CD8-positive, alpha-beta memory T cell (primary cell): ENCODE measurements at regions of chr4 and their contacts with region 1.

Region 1: GRCh38 chr4:80125252-80126177 is 52.5 kb upstream of the ANTXR2 start:
- DNase-seq: peak in 4 of 5 donors; percentile 2 to 63 (median 58)
- H3K4me3 ChIP-seq: peak overlapping the region; percentile 31
- H3K4me3 Mint-ChIP-seq: peak overlapping the region; percentile 14 to 71 (median 44)
- H3K27ac ChIP-seq: peak overlapping the region; percentile 76
- H3K27ac Mint-ChIP-seq: peak overlapping the region; percentile 78 to 95 (median 90)
- H3K4me1 ChIP-seq: peaks cover 46% of the 10 kb centered on the region
- H3K4me1 Mint-ChIP-seq: peaks cover 48 to 60% (median 53%) of the 10 kb centered on the region in 3 donors
- H3K27me3 ChIP-seq: no peaks in the 10 kb centered on the region
- H3K27me3 Mint-ChIP-seq: no peaks in the 10 kb centered on the region

Region 2: GRCh38 chr4:78845472-78845871 is 1280.0 kb before region 1 on chr4:
- CTCF ChIA-PET with region 1: no interaction called
- POLR2A ChIA-PET with region 1: no interaction called
- DNase-seq: no peak
- H3K4me3 ChIP-seq: no peak overlapping the region
- H3K4me3 Mint-ChIP-seq: no peak overlapping the region
- H3K27ac ChIP-seq: no peak overlapping the region
- H3K27ac Mint-ChIP-seq: no peak overlapping the region
- H3K4me1 ChIP-seq: no peaks in the 10 kb centered on the region
- H3K4me1 Mint-ChIP-seq: no peaks in the 10 kb centered on the region
- H3K27me3 ChIP-seq: no peaks in the 10 kb centered on the region
- H3K27me3 Mint-ChIP-seq: no peaks in the 10 kb centered on the region

Region 3: GRCh38 chr4:79982601-79983322 is 142.8 kb before region 1 on chr4:
- CTCF ChIA-PET with region 1: no interaction called
- POLR2A ChIA-PET with region 1: no interaction called
- DNase-seq: no peak
- H3K4me3 ChIP-seq: no peak overlapping the region
- H3K4me3 Mint-ChIP-seq: no peak overlapping the region
- H3K27ac ChIP-seq: no peak overlapping the region
- H3K27ac Mint-ChIP-seq: no peak overlapping the region
- H3K4me1 ChIP-seq: no peaks in the 10 kb centered on the region
- H3K4me1 Mint-ChIP-seq: peaks cover 6 to 11% (median 9%) of the 10 kb centered on the region in 3 donors
- H3K27me3 ChIP-seq: no peaks in the 10 kb centered on the region
- H3K27me3 Mint-ChIP-seq: no peaks in the 10 kb centered on the region

Region 4: DNA sequence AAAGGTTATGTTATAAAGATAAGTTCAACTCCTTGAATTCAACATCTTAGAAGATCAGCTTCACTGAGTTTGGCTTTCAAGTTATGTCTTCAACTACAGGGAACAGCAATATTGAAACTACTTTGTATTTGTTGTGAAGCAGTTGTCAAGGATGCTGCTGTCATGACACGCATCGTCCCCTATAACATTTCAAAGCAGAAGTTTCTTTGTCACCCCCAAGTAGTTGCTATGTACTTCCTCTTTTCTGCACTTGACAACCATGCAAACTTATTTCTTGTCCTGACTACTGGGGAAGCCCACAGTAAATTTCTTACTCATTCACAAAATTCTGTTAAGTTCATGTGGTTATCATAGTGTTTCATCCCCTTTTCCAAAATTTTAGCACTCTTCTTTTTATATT is 66.8 kb before region 1 on chr4:
- CTCF ChIA-PET with region 1: no interaction called
- POLR2A ChIA-PET with region 1: no interaction called
- DNase-seq: peak in 4 of 5 donors; percentile 28 to 84 (median 77)
- H3K4me3 ChIP-seq: peak overlapping the region; percentile 7
- H3K4me3 Mint-ChIP-seq: peak overlapping the region; percentile 61 to 85 (median 81)
- H3K27ac ChIP-seq: peak overlapping the region; percentile 92
- H3K27ac Mint-ChIP-seq: peak overlapping the region; percentile 92 to 100 (median 96)
- H3K4me1 ChIP-seq: peaks cover 18% of the 10 kb centered on the region
- H3K4me1 Mint-ChIP-seq: peaks cover 36 to 63% (median 46%) of the 10 kb centered on the region in 3 donors
- H3K27me3 ChIP-seq: no peaks in the 10 kb centered on the region
- H3K27me3 Mint-ChIP-seq: no peaks in the 10 kb centered on the region

Region 5: GRCh38 chr4:80138551-80139538 is 13.3 kb after region 1 on chr4:
- CTCF ChIA-PET with region 1: interaction called, 37 read pairs
- POLR2A ChIA-PET with region 1: interaction called, 6 read pairs
- DNase-seq: peak; percentile 7 to 72 (median 51)
- H3K4me3 ChIP-seq: no peak overlapping the region
- H3K4me3 Mint-ChIP-seq: peak overlapping the region in 6 of 7 donors; percentile 1 to 55 (median 6)
- H3K27ac ChIP-seq: peak overlapping the region; percentile 18
- H3K27ac Mint-ChIP-seq: peak overlapping the region; percentile 62 to 91 (median 79)
- H3K4me1 ChIP-seq: peaks cover 37% of the 10 kb centered on the region
- H3K4me1 Mint-ChIP-seq: peaks cover 26 to 54% (median 49%) of the 10 kb centered on the region in 3 donors
- H3K27me3 ChIP-seq: no peaks in the 10 kb centered on the region
- H3K27me3 Mint-ChIP-seq: no peaks in the 10 kb centered on the region

Region 6: GRCh38 chr4:80173401-80173800 is 47.9 kb after region 1 on chr4:
- CTCF ChIA-PET with region 1: interaction called, 135 read pairs
- POLR2A ChIA-PET with region 1: interaction called, 6 read pairs
- DNase-seq: peak in 4 of 5 donors; percentile 39 to 72 (median 66)
- H3K4me3 ChIP-seq: peak overlapping the region; percentile 2
- H3K4me3 Mint-ChIP-seq: peak overlapping the region; percentile 47 to 82 (median 71)
- H3K27ac ChIP-seq: no peak overlapping the region
- H3K27ac Mint-ChIP-seq: peak overlapping the region; percentile 83 to 98 (median 94)
- H3K4me1 ChIP-seq: peaks cover 43% of the 10 kb centered on the region
- H3K4me1 Mint-ChIP-seq: peaks cover 48 to 67% (median 55%) of the 10 kb centered on the region in 3 donors
- H3K27me3 ChIP-seq: no peaks in the 10 kb centered on the region
- H3K27me3 Mint-ChIP-seq: no peaks in the 10 kb centered on the region

Region 7: GRCh38 chr4:80184053-80184790 is 58.7 kb after region 1 on chr4:
- CTCF ChIA-PET with region 1: interaction called, 135 read pairs
- POLR2A ChIA-PET with region 1: interaction called, 34 read pairs
- DNase-seq: peak; percentile 87 to 93 (median 89)
- H3K4me3 ChIP-seq: peak overlapping the region; percentile 97
- H3K4me3 Mint-ChIP-seq: peak overlapping the region; percentile 96 to 100 (median 99)
- H3K27ac ChIP-seq: peak overlapping the region; percentile 83
- H3K27ac Mint-ChIP-seq: peak overlapping the region; percentile 87 to 98 (median 98)
- H3K4me1 ChIP-seq: peaks cover 36% of the 10 kb centered on the region
- H3K4me1 Mint-ChIP-seq: peaks cover 58 to 64% (median 59%) of the 10 kb centered on the region in 3 donors
- H3K27me3 ChIP-seq: no peaks in the 10 kb centered on the region
- H3K27me3 Mint-ChIP-seq: peaks cover 0 to 7% of the 10 kb centered on the region in 2 donors

Region 8: GRCh38 chr4:80189956-80190677 is 64.6 kb after region 1 on chr4:
- CTCF ChIA-PET with region 1: interaction called, 135 read pairs
- POLR2A ChIA-PET with region 1: interaction called, 34 read pairs
- DNase-seq: no peak
- H3K4me3 ChIP-seq: no peak overlapping the region
- H3K4me3 Mint-ChIP-seq: peak overlapping the region in 1 of 7 donors; percentile 55
- H3K27ac ChIP-seq: no peak overlapping the region
- H3K27ac Mint-ChIP-seq: no peak overlapping the region
- H3K4me1 ChIP-seq: peaks cover 13% of the 10 kb centered on the region
- H3K4me1 Mint-ChIP-seq: peaks cover 22 to 28% (median 23%) of the 10 kb centered on the region in 3 donors
- H3K27me3 ChIP-seq: no peaks in the 10 kb centered on the region
- H3K27me3 Mint-ChIP-seq: peaks cover 0 to 2% of the 10 kb centered on the region in 2 donors

Region 9: DNA sequence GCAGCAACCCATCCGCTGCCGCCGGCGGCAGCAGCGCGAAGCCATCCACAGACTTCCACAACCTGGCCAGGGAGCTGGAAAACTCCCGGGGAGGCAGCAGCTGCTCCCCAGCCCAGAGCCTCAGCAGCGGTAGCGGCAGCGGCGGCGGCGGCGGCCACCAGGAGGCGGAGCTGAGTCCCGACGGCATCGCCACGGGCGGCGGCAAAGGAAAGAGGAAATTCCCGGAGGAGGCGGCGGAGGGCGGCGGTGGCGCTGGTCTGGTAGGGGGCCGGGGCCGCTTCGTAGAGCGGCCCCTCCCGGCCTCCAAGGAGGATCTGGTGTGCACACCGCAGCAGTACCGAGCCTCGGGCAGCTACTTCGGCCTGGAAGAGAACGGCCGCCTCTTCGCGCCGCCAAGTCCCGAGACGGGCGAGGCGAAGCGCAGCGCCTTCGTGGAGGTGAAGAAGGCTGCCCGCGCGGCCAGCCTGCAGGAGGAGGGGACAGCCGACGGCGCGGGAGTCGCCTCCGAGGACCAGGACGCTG is 76.7 kb after region 1 on chr4:
- CTCF ChIA-PET with region 1: interaction called, 47 read pairs
- POLR2A ChIA-PET with region 1: interaction called, 16 read pairs
- DNase-seq: peak; percentile 68 to 84 (median 77)
- H3K4me3 ChIP-seq: peak overlapping the region; percentile 42
- H3K4me3 Mint-ChIP-seq: peak overlapping the region; percentile 86 to 97 (median 87)
- H3K27ac ChIP-seq: peak overlapping the region; percentile 67
- H3K27ac Mint-ChIP-seq: peak overlapping the region; percentile 74 to 95 (median 94)
- H3K4me1 ChIP-seq: peaks cover 12% of the 10 kb centered on the region
- H3K4me1 Mint-ChIP-seq: peaks cover 27 to 36% (median 27%) of the 10 kb centered on the region in 3 donors
- H3K27me3 ChIP-seq: no peaks in the 10 kb centered on the region
- H3K27me3 Mint-ChIP-seq: peaks cover 0 to 7% of the 10 kb centered on the region in 2 donors

Region 10: DNA sequence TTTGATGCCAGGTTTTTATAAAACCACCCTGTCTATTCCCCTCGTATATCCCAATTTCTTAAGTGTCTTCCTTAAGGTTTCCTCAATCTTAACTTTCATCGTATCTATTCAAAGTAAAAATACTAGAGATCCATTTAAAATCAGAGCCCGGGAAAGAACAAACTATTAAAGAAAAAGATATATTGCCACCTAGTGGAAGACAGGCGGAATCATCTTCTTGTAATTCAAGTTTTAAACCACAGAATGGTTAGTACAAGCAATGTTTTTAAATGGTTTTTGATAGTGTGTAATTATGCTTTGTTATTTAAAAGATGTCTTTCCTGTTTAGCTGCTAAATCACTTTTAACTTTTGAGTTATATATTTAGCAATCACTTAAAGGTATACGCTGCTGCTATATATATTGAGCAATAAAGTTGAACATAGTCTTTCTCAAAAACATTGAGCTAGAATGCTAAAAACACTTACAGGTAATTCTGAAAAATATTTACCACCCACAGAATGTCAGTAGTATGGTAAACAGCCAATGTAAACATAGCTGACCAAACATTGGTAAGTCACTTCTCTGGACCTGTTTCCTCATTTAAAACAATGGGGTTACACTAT is 90.0 kb after region 1 on chr4:
- CTCF ChIA-PET with region 1: interaction called, 10 read pairs
- POLR2A ChIA-PET with region 1: interaction called, 3 read pairs
- DNase-seq: peak in 2 of 5 donors; percentile 38 to 41
- H3K4me3 ChIP-seq: no peak overlapping the region
- H3K4me3 Mint-ChIP-seq: no peak overlapping the region
- H3K27ac ChIP-seq: no peak overlapping the region
- H3K27ac Mint-ChIP-seq: no peak overlapping the region
- H3K4me1 ChIP-seq: no peaks in the 10 kb centered on the region
- H3K4me1 Mint-ChIP-seq: peaks cover 0 to 2% (median 0%) of the 10 kb centered on the region in 3 donors
- H3K27me3 ChIP-seq: no peaks in the 10 kb centered on the region
- H3K27me3 Mint-ChIP-seq: peaks cover 13 to 52% of the 10 kb centered on the region in 2 donors